ENCODE measurements at regions of chr4 and their contacts with region 1.

Region 1: GRCh38 chr4:159446266-159446976 is 343.5 kb downstream of the RAPGEF2 start:
- DNase-seq: peak; percentile 28
- ATAC-seq: peak; percentile 97 to 98

Region 2: DNA sequence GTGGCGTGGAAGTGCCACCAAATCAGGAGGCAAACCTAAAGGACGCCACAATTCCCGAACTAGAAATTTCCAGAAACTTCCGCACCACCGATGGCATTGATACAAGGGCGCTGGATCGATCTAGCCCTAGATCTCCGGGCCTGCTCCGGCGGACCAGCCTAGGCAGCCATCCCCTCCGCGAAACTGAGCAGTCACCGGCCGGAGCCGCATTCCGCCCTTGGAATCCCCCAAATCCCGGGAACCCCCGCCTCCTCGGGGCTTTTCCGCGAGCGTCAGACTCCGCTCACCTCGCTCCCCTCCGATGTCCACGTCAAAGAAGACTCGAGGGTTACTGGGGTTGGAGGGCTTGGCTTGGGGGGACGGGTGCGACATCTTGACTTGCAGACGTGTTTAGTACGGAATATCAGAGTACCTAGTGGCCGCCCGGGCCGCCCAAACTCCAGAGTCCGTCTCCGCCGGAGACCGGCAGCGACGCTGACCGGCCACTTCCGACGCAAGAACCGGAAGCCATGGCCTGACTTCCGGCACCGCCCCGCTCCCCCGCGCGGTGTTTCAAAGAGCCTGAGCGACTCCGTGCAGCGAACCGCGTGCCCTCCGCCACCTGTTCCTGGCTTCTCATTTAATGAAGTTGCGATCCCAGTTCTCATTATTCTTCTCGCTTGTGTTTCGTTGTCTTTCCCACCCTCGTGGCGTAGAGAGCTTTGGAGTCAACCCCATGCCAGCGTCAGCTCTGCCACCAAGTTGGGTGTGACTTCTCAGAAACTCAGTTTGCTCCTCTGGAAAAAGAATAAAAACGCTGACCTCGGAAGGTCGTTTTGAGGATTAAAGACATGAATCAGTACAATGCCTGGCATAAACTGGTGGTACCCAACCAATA is 723.3 kb before region 1 on chr4 and contains the start of gene PPID:
- intact Hi-C with region 1: loop called in 1 of 2 experiments (anchors 10 kb)
- DNase-seq: peak; percentile 89
- ATAC-seq: peak; percentile 97 to 99
- total RNA-seq, gene PPID: 22.6 to 30.7 TPM

Region 3: DNA sequence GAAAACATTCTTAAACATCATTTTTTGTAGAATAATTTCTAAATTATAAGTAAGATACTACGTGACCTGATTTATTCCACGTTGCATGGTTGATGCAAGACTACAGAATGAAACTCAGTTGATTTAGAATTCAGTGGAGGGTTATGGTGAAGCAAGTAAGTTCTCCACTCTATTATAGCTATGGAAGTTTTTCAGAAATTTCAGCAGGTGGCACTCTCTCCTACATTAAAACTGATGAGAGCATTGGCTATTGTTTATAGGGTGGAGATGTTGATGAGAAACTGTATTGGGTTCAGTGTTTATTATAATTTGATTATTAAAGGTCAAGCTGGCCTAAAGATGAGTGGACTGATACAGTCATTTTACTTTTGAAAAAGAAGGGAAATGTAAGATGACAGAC is 589.6 kb before region 1 on chr4:
- intact Hi-C with region 1: loop called in 1 of 2 experiments (anchors 10 kb)
- DNase-seq: no peak
- ATAC-seq: peak; percentile 69 to 70

Region 4: DNA sequence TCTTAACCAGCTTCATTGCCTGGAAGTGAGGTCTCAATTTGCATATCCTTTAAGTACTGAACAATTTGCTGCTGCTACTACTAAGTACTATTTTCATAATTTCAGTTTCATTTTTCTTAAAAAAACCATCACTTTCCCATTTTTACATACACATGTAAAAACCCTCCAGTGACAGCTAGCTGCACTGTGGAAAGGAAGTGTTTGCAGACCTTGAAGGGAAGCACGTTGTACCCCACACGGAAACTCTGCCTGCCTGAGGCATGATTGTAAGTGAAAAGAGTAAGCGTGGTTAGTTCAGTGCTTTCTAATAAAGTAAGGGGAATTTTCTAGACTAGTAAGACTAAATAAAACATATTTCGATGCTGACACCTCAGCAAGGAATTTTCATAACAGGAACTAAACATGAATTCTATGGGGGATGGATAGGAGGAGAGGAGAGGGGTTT is 240.0 kb before region 1 on chr4:
- intact Hi-C with region 1: loop called in 1 of 2 experiments (anchors 2 kb)
- DNase-seq: no peak
- ATAC-seq: no peak

Region 5: DNA sequence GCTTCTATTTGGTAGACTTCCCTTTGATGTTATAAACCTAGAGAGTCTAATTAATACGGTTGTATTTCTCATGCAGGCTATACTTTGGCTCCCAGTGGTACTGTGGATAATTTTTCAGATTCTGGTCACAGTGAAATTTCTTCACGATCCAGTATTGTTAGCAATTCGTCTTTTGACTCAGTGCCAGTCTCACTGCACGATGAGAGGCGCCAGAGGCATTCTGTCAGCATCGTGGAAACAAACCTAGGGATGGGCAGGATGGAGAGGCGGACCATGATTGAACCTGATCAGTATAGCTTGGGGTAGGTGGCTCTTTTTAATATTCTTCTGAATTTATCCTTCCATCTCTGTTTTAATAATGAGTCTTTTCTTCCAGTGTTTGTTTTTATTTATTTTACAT is 93.8 kb before region 1 on chr4:
- intact Hi-C with region 1: loop called in 1 of 2 experiments (anchors 5 kb)
- DNase-seq: no peak
- ATAC-seq: no peak

Measured in left cardiac atrium (tissue), 4 donors.